Stomach (tissue), 19 donors: ENCODE measurements at regions of chr16 and their contacts with region 1.

Region 1: DNA sequence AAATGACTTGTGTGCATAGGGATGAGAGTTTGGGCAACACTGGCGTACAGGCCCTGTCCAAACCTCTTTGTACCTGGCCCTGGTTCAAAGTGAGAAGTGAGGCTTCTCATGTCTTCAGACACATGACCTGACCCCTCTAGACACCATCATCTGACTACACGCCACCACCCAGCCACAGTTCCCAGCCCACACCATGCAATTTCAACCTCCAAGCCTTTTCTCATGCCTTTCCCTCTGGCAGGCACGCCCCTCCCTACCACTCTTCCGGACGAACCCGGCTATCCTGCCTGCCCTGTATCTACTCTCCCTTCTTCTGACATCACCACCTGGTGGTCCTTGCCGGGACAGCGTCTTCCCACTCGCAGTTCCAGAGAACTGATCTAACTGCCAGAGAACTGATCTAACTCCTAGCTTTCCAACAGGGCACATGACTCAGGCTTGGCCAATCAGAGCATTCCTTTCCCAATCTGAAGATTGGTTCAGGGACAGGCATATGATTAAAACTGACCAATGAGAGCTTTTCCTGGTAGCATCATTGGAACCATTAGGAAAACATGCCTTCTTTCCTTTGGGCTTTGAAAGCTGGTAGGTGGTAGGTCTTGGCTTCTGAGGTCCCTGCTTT is 27.1 kb upstream of the IL21R start:
- DNase-seq: peak; percentile 33 to 79
- H3K4me3 ChIP-seq: peak overlapping the region in 1 of 4 donors; percentile 7
- H3K27ac ChIP-seq: peak overlapping the region in 3 of 5 donors; percentile 1 to 12 (median 7)
- H3K4me1 ChIP-seq: peaks cover 0 to 8% (median 4%) of the 10 kb centered on the region in 4 donors
- H3K27me3 ChIP-seq: no peaks in the 10 kb centered on the region
- CTCF ChIP-seq: peak in 3 of 7 experiments; percentile 29 to 41 (median 33)
- EP300 ChIP-seq: no peak
- POLR2A ChIP-seq: no peak

Region 2: DNA sequence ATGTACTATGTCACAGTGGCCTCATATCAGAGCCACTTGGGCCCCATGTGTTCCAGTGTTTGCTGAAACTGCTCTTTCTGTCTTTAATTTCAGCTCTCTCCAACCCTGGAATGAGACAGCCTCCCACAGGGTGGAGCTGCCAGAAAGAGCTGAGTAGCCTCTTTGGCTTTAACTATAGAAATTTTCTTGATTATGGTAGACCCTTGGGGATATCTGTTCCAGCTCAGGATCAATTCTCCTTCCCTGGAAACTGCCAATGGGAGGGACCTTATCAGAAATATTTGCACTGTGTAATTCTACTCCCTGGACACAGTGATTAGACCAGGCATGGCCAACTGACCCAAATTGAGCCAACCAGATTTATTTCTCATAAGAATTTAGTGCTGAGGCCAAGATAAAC is 210.6 kb before region 1 on chr16:
- intact Hi-C with region 1: no loop called
- DNase-seq: peak in 1 of 2 donors; percentile 23
- H3K4me3 ChIP-seq: no peak overlapping the region
- H3K27ac ChIP-seq: no peak overlapping the region
- H3K4me1 ChIP-seq: no peaks in the 10 kb centered on the region
- H3K27me3 ChIP-seq: no peaks in the 10 kb centered on the region
- CTCF ChIP-seq: no peak
- EP300 ChIP-seq: no peak
- POLR2A ChIP-seq: no peak

Region 3: DNA sequence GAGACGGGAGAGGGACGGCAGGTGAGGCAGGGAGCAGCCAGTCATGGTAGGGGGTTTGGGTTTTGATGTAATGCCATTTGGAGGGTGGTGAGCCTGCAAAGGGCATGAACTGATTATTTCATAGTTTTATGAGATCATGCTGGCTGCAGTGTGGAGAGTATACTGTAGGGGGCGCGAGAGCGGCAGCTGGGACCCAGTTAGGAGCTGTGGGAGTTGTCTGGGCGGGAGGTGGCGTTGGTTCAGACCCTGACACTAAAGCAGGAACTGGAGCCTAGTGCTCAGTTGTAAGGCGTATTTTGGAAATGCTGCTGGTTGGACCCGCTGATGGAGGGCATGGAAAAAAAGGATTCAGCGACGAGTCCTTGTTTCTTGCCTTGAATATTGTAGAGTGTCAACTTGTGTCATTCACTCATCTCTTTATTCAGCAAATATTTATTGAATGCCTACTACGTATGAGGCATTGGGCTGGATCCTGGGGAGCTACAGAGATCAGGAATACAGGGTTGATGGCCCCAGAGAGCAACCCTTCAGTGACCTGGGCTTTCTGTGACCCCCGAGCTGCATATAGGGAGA is 195.3 kb before region 1 on chr16:
- intact Hi-C with region 1: loop called (anchors 10 kb)
- DNase-seq: peak; percentile 88 to 91
- H3K4me3 ChIP-seq: no peak overlapping the region
- H3K27ac ChIP-seq: no peak overlapping the region
- H3K4me1 ChIP-seq: peaks cover 0 to 12% (median 5%) of the 10 kb centered on the region in 4 donors
- H3K27me3 ChIP-seq: no peaks in the 10 kb centered on the region
- CTCF ChIP-seq: peak in 6 of 7 experiments; percentile 46 to 96 (median 92)
- EP300 ChIP-seq: no peak
- POLR2A ChIP-seq: no peak

Region 4: DNA sequence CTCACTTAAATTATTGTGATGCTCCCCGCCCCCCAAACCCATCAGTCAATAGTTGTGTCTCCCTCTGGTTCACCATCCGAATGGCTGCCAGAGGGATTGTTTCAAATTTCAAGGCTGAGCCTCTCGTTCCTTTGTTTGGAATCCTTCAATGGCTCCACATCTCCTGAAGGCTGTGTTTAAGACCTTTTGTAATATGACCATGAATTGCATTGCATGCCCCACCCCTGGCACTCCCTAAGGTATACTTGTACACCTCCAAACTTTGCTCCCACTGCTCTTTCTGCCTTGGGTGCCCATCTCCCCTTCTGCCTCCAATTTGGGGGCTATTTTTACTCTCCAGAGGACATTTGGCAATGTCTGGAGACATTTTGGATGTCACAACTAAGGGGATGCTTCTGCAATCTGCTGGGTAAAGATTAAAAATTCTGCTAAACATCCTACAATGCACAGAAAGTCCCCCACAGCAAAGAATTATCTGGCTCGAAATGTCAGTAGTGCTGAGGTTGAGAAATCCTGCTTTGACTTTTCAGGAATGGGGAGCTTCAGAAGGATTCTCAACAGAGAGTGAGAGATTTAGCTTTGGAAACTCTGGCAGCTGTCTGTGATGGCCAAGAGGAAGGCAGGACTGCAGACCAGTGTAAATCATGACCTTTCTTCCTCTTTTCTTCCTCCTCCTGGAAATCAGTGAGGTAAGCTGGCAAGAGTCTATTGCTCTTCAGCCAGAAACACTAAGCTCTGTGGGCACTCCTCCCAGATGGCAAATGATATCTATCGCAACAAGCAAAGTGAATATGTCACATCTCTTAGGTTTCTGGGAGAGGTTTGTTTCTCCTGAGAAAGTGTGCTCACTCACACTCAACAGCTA is 69.8 kb before region 1 on chr16:
- intact Hi-C with region 1: no loop called
- DNase-seq: no peak
- H3K4me3 ChIP-seq: no peak overlapping the region
- H3K27ac ChIP-seq: peak overlapping the region in 3 of 5 donors; percentile 29 to 43 (median 35)
- H3K4me1 ChIP-seq: peaks cover 0 to 18% (median 2%) of the 10 kb centered on the region in 4 donors
- H3K27me3 ChIP-seq: no peaks in the 10 kb centered on the region
- CTCF ChIP-seq: no peak
- EP300 ChIP-seq: no peak
- POLR2A ChIP-seq: no peak

Region 5: GRCh38 chr16:27326738-27327585 is 48.0 kb before region 1 on chr16:
- intact Hi-C with region 1: no loop called
- DNase-seq: peak; percentile 71
- H3K4me3 ChIP-seq: peak overlapping the region in 2 of 4 donors; percentile 4 to 14
- H3K27ac ChIP-seq: peak overlapping the region; percentile 89 to 100 (median 100)
- H3K4me1 ChIP-seq: peaks cover 72 to 100% (median 86%) of the 10 kb centered on the region in 4 donors
- H3K27me3 ChIP-seq: no peaks in the 10 kb centered on the region
- CTCF ChIP-seq: peak in 1 of 7 experiments; percentile 7
- EP300 ChIP-seq: peak; percentile 80
- POLR2A ChIP-seq: no peak

Region 6: DNA sequence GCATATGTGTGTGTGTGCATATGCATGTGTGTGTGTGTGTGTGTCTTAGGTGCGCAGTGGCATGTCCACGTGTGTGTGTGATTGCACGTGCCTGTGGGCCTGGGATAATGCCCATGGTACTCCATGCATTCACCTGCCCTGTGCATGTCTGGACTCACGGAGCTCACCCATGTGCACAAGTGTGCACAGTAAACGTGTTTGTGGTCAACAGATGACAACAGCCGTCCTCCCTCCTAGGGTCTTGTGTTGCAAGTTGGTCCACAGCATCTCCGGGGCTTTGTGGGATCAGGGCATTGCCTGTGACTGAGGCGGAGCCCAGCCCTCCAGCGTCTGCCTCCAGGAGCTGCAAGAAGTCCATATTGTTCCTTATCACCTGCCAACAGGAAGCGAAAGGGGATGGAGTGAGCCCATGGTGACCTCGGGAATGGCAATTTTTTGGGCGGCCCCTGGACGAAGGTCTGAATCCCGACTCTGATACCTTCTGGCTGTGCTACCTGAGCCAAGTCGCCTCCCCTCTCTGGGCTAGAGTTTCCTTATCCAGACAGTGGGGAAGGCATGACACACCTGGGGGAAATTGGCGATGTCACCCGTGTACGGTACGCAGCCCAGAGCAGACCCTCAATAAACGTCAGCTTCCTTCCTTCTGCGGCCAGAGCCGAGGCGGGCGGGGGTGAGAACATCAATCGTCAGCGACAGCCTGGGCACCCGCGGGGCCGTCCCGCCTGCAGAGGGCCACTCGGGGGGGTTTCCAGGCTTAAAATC is 74.7 kb after region 1 on chr16:
- intact Hi-C with region 1: loop called (anchors 10 kb)
- DNase-seq: peak; percentile 43 to 69
- H3K4me3 ChIP-seq: no peak overlapping the region
- H3K27ac ChIP-seq: no peak overlapping the region
- H3K4me1 ChIP-seq: peaks cover 0 to 12% (median 8%) of the 10 kb centered on the region in 4 donors
- H3K27me3 ChIP-seq: peaks cover 0 to 73% (median 19%) of the 10 kb centered on the region in 3 donors
- CTCF ChIP-seq: no peak
- EP300 ChIP-seq: no peak
- POLR2A ChIP-seq: no peak